ENCODE measurements at regions of chr10 and their contacts with region 1.

Region 1: DNA sequence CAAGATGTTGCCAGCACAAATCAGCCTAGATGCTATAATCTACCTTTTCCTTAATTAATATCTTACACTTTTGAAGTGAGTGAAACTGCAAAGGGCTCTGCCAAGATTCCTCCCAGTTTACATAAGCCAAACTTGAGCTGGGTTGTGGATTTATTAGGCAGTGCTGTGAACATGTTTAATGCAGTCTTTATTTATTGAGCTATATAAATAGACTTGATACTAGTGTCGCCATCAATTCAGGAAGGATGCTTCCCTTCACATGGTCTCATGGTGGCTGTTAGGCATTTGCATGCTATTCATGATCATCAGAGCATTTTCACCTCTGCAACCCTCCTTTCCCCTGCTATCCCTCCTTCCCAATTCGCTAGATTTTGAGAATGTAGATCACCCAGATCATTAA is 40.2 kb downstream of the PLEKHS1 start:
- DNase-seq: no peak
- ATAC-seq: no peak
- H3K4me3 ChIP-seq: no peak overlapping the region
- H3K27ac ChIP-seq: no peak overlapping the region
- H3K4me1 ChIP-seq: no peaks in the 10 kb centered on the region
- H3K27me3 ChIP-seq: no peaks in the 10 kb centered on the region

Region 2: GRCh38 chr10:113704637-113705343 is 86.9 kb before region 1 on chr10:
- intact Hi-C with region 1: loop called in 1 of 2 experiments (anchors 10 kb)
- DNase-seq: no peak
- ATAC-seq: no peak
- H3K4me3 ChIP-seq: no peak overlapping the region
- H3K27ac ChIP-seq: no peak overlapping the region
- H3K4me1 ChIP-seq: no peaks in the 10 kb centered on the region
- H3K27me3 ChIP-seq: no peaks in the 10 kb centered on the region

Measured in aorta (tissue), 5 donors.